ENCODE measurements at regions of chr3 and their contacts with region 1.

Region 1: DNA sequence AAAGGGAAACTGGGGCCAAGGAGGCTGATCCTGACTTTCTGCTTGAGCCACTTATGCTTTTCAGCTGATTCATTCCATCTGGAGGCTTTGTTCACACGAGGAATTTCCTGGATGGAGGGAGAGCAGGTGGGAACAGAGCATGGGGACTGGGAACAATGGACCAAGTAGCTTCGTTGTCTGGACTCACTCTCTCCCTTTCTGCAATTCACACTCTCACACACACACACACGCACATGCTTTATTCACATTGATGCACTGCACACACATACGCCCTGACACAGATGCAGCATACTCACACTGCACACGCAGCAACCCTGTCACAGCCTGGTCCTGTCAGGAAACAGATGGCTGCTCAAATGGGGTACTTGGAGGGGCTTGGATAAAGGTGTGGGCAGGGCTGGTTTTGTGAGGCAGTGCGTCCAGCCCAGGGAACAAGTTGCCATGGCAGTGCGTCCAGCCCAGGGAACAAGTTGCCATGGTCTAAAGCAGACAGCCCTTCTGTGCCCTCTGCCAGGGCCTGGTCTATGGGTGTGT is 19.8 kb upstream of the CHCHD6 start:
- DNase-seq: no peak
- ATAC-seq: no peak
- H3K4me3 ChIP-seq: no peak overlapping the region
- H3K27ac ChIP-seq: no peak overlapping the region
- H3K4me1 ChIP-seq: no peaks in the 10 kb centered on the region
- H3K27me3 ChIP-seq: no peaks in the 10 kb centered on the region
- CTCF ChIP-seq: no peak

Region 2: GRCh38 chr3:126811530-126811929 is 127.2 kb after region 1 on chr3:
- intact Hi-C with region 1: no loop called
- DNase-seq: no peak
- ATAC-seq: no peak
- H3K4me3 ChIP-seq: no peak overlapping the region
- H3K27ac ChIP-seq: no peak overlapping the region
- H3K4me1 ChIP-seq: no peaks in the 10 kb centered on the region
- H3K27me3 ChIP-seq: no peaks in the 10 kb centered on the region
- CTCF ChIP-seq: no peak

Region 3: GRCh38 chr3:127547761-127548605 is 863.7 kb after region 1 on chr3:
- intact Hi-C with region 1: loop called (anchors 5 kb)
- DNase-seq: peak; percentile 91
- ATAC-seq: peak; percentile 92
- H3K4me3 ChIP-seq: peak overlapping the region; percentile 71
- H3K27ac ChIP-seq: peak overlapping the region; percentile 42
- H3K4me1 ChIP-seq: peaks cover 18% of the 10 kb centered on the region
- H3K27me3 ChIP-seq: no peaks in the 10 kb centered on the region
- CTCF ChIP-seq: peak; percentile 67